Activated naive CD4-positive, alpha-beta T cell treated with anti-CD3 and anti-CD28 coated beads for 36 hours (primary cell): ENCODE measurements at regions of chr7 and their contacts with region 1.

Region 1: GRCh38 chr7:5822742-5823503 is 41.5 kb upstream of the RNF216 start:
- DNase-seq: peak; percentile 99
- H3K4me3 Mint-ChIP-seq: peak overlapping the region; percentile 77
- H3K27ac Mint-ChIP-seq: peak overlapping the region; percentile 77
- H3K4me1 Mint-ChIP-seq: peaks cover 26% of the 10 kb centered on the region
- H3K27me3 Mint-ChIP-seq: no peaks in the 10 kb centered on the region

Region 2: DNA sequence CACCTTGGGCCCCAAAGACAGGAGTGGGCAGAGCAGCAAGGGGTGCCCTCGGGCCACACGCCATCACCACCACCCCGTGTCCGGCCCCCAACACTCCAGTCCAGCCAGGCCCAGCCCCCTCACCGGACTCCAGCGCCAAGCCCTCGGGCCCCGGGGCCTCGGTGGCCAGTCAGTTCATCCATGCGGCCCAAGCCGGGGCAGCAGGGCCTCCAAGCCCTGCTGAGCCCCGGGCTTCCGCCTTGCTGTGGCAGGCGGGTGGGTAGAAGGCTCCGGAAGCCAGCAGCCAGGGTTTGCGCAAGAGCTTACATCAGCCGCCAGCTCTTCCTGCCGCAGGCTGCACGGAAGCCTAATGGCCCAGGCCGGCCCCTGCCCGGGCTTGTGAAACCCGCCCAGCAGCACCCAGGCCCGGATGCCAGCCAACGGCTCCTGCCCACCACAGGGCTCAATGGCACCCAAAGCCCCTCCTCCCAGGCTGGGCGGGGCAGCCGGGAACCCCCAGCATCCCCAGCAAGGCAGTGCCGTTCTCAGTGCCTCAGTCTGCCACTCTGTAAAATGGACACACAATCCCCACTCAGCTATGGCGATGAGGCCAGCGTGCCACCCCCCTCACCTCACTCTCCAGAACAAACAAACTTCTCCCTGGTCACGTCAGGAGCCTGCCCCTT is 425.8 kb before region 1 on chr7:
- CTCF ChIA-PET with region 1: no interaction called
- intact Hi-C with region 1: loop called (anchors 5 kb)
- DNase-seq: peak; percentile 92
- H3K4me3 Mint-ChIP-seq: peak overlapping the region; percentile 79
- H3K27ac Mint-ChIP-seq: peak overlapping the region; percentile 92
- H3K4me1 Mint-ChIP-seq: peaks cover 32% of the 10 kb centered on the region
- H3K27me3 Mint-ChIP-seq: no peaks in the 10 kb centered on the region

Region 3: GRCh38 chr7:5557920-5558401 is 265.0 kb before region 1 on chr7:
- CTCF ChIA-PET with region 1: no interaction called
- intact Hi-C with region 1: loop called (anchors 2 kb)
- DNase-seq: peak; percentile 37
- H3K4me3 Mint-ChIP-seq: peak overlapping the region; percentile 60
- H3K27ac Mint-ChIP-seq: peak overlapping the region; percentile 85
- H3K4me1 Mint-ChIP-seq: peaks cover 40% of the 10 kb centered on the region
- H3K27me3 Mint-ChIP-seq: no peaks in the 10 kb centered on the region

Region 4: GRCh38 chr7:5780801-5781496 is 42.0 kb before region 1 on chr7:
- CTCF ChIA-PET with region 1: interaction called, 4 read pairs
- intact Hi-C with region 1: loop called (anchors 1 kb)
- DNase-seq: peak; percentile 57
- H3K4me3 Mint-ChIP-seq: peak overlapping the region; percentile 84
- H3K27ac Mint-ChIP-seq: peak overlapping the region; percentile 78
- H3K4me1 Mint-ChIP-seq: peaks cover 42% of the 10 kb centered on the region
- H3K27me3 Mint-ChIP-seq: no peaks in the 10 kb centered on the region

Region 5: DNA sequence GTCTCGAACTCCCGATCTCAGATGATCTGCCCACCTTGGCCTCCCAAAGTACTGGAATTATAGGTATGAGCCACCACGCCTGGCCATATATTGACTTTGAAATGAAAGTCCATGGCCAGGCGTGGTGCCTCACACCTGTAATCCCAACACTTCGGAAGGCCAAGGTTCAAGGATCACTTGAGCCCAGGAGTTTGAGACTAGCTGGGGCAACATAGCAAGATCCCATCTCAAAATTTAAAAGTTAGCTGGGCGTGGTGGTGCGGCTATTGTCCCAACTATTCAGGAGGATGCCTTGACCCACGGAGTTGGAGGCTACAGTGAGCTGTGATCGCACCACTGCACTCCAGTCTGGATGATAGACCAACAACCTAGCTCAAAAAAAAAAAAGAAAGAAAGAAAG is 69.6 kb after region 1 on chr7:
- CTCF ChIA-PET with region 1: no interaction called
- intact Hi-C with region 1: loop called (anchors 10 kb)
- DNase-seq: no peak
- H3K4me3 Mint-ChIP-seq: no peak overlapping the region
- H3K27ac Mint-ChIP-seq: no peak overlapping the region
- H3K4me1 Mint-ChIP-seq: no peaks in the 10 kb centered on the region
- H3K27me3 Mint-ChIP-seq: no peaks in the 10 kb centered on the region